Activated CD8-positive, alpha-beta T cell treated with anti-CD3 and anti-CD28 coated beads, Interleukin-2, amount 10 ng/mL, durations not matched to agents 7 days and 5 days (primary cell): ENCODE measurements at regions of chr9 and their contacts with region 1.

Region 1: GRCh38 chr9:71768388-71769174 is at the start of gene CEMIP2:
- DNase-seq: peak; percentile 92
- ATAC-seq: peak; percentile 84
- H3K4me3 Mint-ChIP-seq: peak within 1 kb of the TSS; percentile 89
- H3K27ac Mint-ChIP-seq: peak within 1 kb of the TSS; percentile 90
- H3K4me1 Mint-ChIP-seq: peaks cover 45% of the 10 kb centered on the region
- H3K27me3 Mint-ChIP-seq: no peaks in the 10 kb centered on the region
- total RNA-seq, gene CEMIP2: 46.5 TPM

Region 2: GRCh38 chr9:71285191-71285656 is 483.4 kb before region 1 on chr9:
- CTCF ChIA-PET with region 1: interaction called, 17 read pairs
- POLR2A ChIA-PET with region 1: no interaction called
- DNase-seq: peak; percentile 61
- ATAC-seq: peak; percentile 79
- H3K4me3 Mint-ChIP-seq: no peak overlapping the region
- H3K27ac Mint-ChIP-seq: no peak overlapping the region
- H3K4me1 Mint-ChIP-seq: no peaks in the 10 kb centered on the region
- H3K27me3 Mint-ChIP-seq: peaks cover 2% of the 10 kb centered on the region

Region 3: GRCh38 chr9:71683598-71684235 is 84.9 kb before region 1 on chr9:
- CTCF ChIA-PET with region 1: interaction called, 4 read pairs
- POLR2A ChIA-PET with region 1: interaction called, 10 read pairs
- DNase-seq: no peak
- ATAC-seq: no peak
- H3K4me3 Mint-ChIP-seq: peak overlapping the region; percentile 34
- H3K27ac Mint-ChIP-seq: peak overlapping the region; percentile 72
- H3K4me1 Mint-ChIP-seq: peaks cover 35% of the 10 kb centered on the region
- H3K27me3 Mint-ChIP-seq: no peaks in the 10 kb centered on the region

Region 4: GRCh38 chr9:71795097-71795813 is 26.7 kb after region 1 on chr9:
- CTCF ChIA-PET with region 1: interaction called, 8 read pairs
- POLR2A ChIA-PET with region 1: interaction called, 24 read pairs
- DNase-seq: peak; percentile 35
- ATAC-seq: peak; percentile 71
- H3K4me3 Mint-ChIP-seq: peak overlapping the region; percentile 60
- H3K27ac Mint-ChIP-seq: peak overlapping the region; percentile 99
- H3K4me1 Mint-ChIP-seq: peaks cover 42% of the 10 kb centered on the region
- H3K27me3 Mint-ChIP-seq: no peaks in the 10 kb centered on the region

Region 5: GRCh38 chr9:71835596-71835995 is 67.0 kb after region 1 on chr9:
- CTCF ChIA-PET with region 1: no interaction called
- POLR2A ChIA-PET with region 1: no interaction called
- DNase-seq: no peak
- ATAC-seq: no peak
- H3K4me3 Mint-ChIP-seq: no peak overlapping the region
- H3K27ac Mint-ChIP-seq: no peak overlapping the region
- H3K4me1 Mint-ChIP-seq: no peaks in the 10 kb centered on the region
- H3K27me3 Mint-ChIP-seq: peaks cover 8% of the 10 kb centered on the region

Region 6: DNA sequence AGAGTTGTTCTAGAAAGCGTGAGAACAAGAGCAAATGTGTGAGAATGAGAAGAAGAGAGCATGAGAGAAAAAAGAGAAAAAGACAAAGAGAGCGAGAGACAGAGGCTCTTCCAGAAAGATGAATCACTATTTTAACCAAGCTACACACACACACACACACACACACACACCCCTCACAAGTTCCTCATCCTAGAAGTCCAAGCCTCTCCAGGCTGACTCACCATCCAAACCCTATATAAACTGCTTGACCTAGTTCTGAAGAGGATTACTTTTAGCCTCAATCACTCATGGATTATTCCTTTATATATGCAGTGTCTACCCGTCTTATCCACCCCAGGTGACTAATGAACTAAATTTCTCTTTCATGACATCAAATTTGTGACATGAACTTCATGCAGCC is 254.3 kb after region 1 on chr9:
- CTCF ChIA-PET with region 1: interaction called, 11 read pairs
- POLR2A ChIA-PET with region 1: no interaction called
- DNase-seq: no peak
- ATAC-seq: no peak
- H3K4me3 Mint-ChIP-seq: no peak overlapping the region
- H3K27ac Mint-ChIP-seq: no peak overlapping the region
- H3K4me1 Mint-ChIP-seq: peaks cover 7% of the 10 kb centered on the region
- H3K27me3 Mint-ChIP-seq: no peaks in the 10 kb centered on the region